ENCODE measurements at regions of chr14 and their contacts with region 1.

Region 1: GRCh38 chr14:64636208-64636979 is 67.8 kb upstream of the PLEKHG3 start:
- DNase-seq: peak; percentile 37 to 73 (median 61)
- ATAC-seq: peak; percentile 90
- H3K4me3 ChIP-seq: no peak overlapping the region
- H3K4me3 Mint-ChIP-seq: no peak overlapping the region
- H3K27ac ChIP-seq: no peak overlapping the region
- H3K27ac Mint-ChIP-seq: peak overlapping the region in 1 of 9 donors; percentile 20
- H3K4me1 ChIP-seq: no peaks in the 10 kb centered on the region
- H3K4me1 Mint-ChIP-seq: peaks cover 0 to 7% (median 0%) of the 10 kb centered on the region in 7 donors
- H3K27me3 ChIP-seq: no peaks in the 10 kb centered on the region
- H3K27me3 Mint-ChIP-seq: peaks cover 0 to 17% (median 5%) of the 10 kb centered on the region in 5 donors

Region 2: GRCh38 chr14:63795532-63795931 is 840.9 kb before region 1 on chr14:
- CTCF ChIA-PET with region 1: no interaction called
- POLR2A ChIA-PET with region 1: no interaction called
- intact Hi-C with region 1: loop called in 1 of 2 experiments (anchors 10 kb)
- DNase-seq: no peak
- ATAC-seq: no peak
- H3K4me3 ChIP-seq: no peak overlapping the region
- H3K4me3 Mint-ChIP-seq: no peak overlapping the region
- H3K27ac ChIP-seq: no peak overlapping the region
- H3K27ac Mint-ChIP-seq: no peak overlapping the region
- H3K4me1 ChIP-seq: no peaks in the 10 kb centered on the region
- H3K4me1 Mint-ChIP-seq: peaks cover 0 to 5% (median 4%) of the 10 kb centered on the region in 7 donors
- H3K27me3 ChIP-seq: no peaks in the 10 kb centered on the region
- H3K27me3 Mint-ChIP-seq: peaks cover 0 to 26% (median 0%) of the 10 kb centered on the region in 5 donors

Region 3: GRCh38 chr14:64338616-64339316 is 297.6 kb before region 1 on chr14:
- CTCF ChIA-PET with region 1: interaction called, 26 read pairs
- POLR2A ChIA-PET with region 1: no interaction called
- intact Hi-C with region 1: no loop called
- DNase-seq: peak; percentile 50 to 84 (median 79)
- ATAC-seq: peak; percentile 87
- H3K4me3 ChIP-seq: peak overlapping the region; percentile 57
- H3K4me3 Mint-ChIP-seq: peak overlapping the region; percentile 87 to 99 (median 92)
- H3K27ac ChIP-seq: peak overlapping the region; percentile 72
- H3K27ac Mint-ChIP-seq: peak overlapping the region; percentile 81 to 91 (median 86)
- H3K4me1 ChIP-seq: peaks cover 5 to 10% of the 10 kb centered on the region in 2 donors
- H3K4me1 Mint-ChIP-seq: peaks cover 6 to 36% (median 19%) of the 10 kb centered on the region in 7 donors
- H3K27me3 ChIP-seq: no peaks in the 10 kb centered on the region
- H3K27me3 Mint-ChIP-seq: no peaks in the 10 kb centered on the region

Region 4: GRCh38 chr14:64423987-64424386 is 212.4 kb before region 1 on chr14:
- CTCF ChIA-PET with region 1: interaction called, 15 read pairs
- POLR2A ChIA-PET with region 1: no interaction called
- intact Hi-C with region 1: no loop called
- DNase-seq: no peak
- ATAC-seq: no peak
- H3K4me3 ChIP-seq: no peak overlapping the region
- H3K4me3 Mint-ChIP-seq: no peak overlapping the region
- H3K27ac ChIP-seq: no peak overlapping the region
- H3K27ac Mint-ChIP-seq: no peak overlapping the region
- H3K4me1 ChIP-seq: no peaks in the 10 kb centered on the region
- H3K4me1 Mint-ChIP-seq: peaks cover 0 to 4% (median 0%) of the 10 kb centered on the region in 7 donors
- H3K27me3 ChIP-seq: no peaks in the 10 kb centered on the region
- H3K27me3 Mint-ChIP-seq: no peaks in the 10 kb centered on the region

Region 5: GRCh38 chr14:64434528-64434927 is 201.9 kb before region 1 on chr14:
- CTCF ChIA-PET with region 1: interaction called, 15 read pairs
- POLR2A ChIA-PET with region 1: no interaction called
- intact Hi-C with region 1: loop called in 1 of 2 experiments (anchors 1 kb)
- DNase-seq: no peak
- ATAC-seq: no peak
- H3K4me3 ChIP-seq: no peak overlapping the region
- H3K4me3 Mint-ChIP-seq: no peak overlapping the region
- H3K27ac ChIP-seq: no peak overlapping the region
- H3K27ac Mint-ChIP-seq: no peak overlapping the region
- H3K4me1 ChIP-seq: no peaks in the 10 kb centered on the region
- H3K4me1 Mint-ChIP-seq: peaks cover 0 to 18% (median 0%) of the 10 kb centered on the region in 7 donors
- H3K27me3 ChIP-seq: no peaks in the 10 kb centered on the region
- H3K27me3 Mint-ChIP-seq: no peaks in the 10 kb centered on the region

Measured in naive thymus-derived CD4-positive, alpha-beta T cell (primary cell).